A549 (cell line): ENCODE measurements at regions of chr6 and their contacts with region 1.

Region 1: GRCh38 chr6:33744001-33744848 is 2.5 kb downstream of the IP6K3 start:
- DNase-seq: peak; percentile 59 to 69
- ATAC-seq: peak; percentile 70 to 90; a peak in 5 of 6 replicates
- H3K4me3 ChIP-seq: no peak overlapping the region
- H3K27ac ChIP-seq: peak overlapping the region; percentile 68 to 77; a peak in 3 of 6 replicates
- H3K4me1 ChIP-seq: peaks cover 27% of the 10 kb centered on the region
- CTCF ChIP-seq: peak; percentile 79
- EP300 ChIP-seq: no peak
- POLR2A ChIP-seq: no peak
- RAD21 ChIP-seq: peak; percentile 70 to 76

Region 2: GRCh38 chr6:32838114-32838958 is 905.9 kb before region 1 on chr6 and contains the start of gene TAP2:
- CTCF ChIA-PET with region 1: no interaction called
- POLR2A ChIA-PET with region 1: no interaction called
- DNase-seq: peak; percentile 88 to 90
- ATAC-seq: peak; percentile 94 to 98
- H3K4me3 ChIP-seq: peak within 1 kb of the TSS; percentile 74
- H3K27ac ChIP-seq: peak within 1 kb of the TSS; percentile 83 to 90
- H3K4me1 ChIP-seq: peaks cover 8% of the 10 kb centered on the region; the same call in 1 of the 3 replicates
- CTCF ChIP-seq: peak; percentile 81
- EP300 ChIP-seq: no peak
- POLR2A ChIP-seq: peak; percentile 29
- RAD21 ChIP-seq: peak; percentile 90 to 91
- polyA plus RNA-seq, gene TAP2: 11.4 and 12.1 TPM in 2 replicates

Region 3: GRCh38 chr6:33672808-33673207 is 71.4 kb before region 1 on chr6:
- CTCF ChIA-PET with region 1: no interaction called
- POLR2A ChIA-PET with region 1: no interaction called
- DNase-seq: peak; percentile 78 to 85
- ATAC-seq: peak; percentile 85 to 90
- H3K4me3 ChIP-seq: no peak overlapping the region
- H3K27ac ChIP-seq: peak overlapping the region; percentile 73 to 92
- H3K4me1 ChIP-seq: peaks cover 78% of the 10 kb centered on the region
- CTCF ChIP-seq: peak; percentile 38; the same call in 2 of the 3 replicates
- EP300 ChIP-seq: no peak
- POLR2A ChIP-seq: no peak
- RAD21 ChIP-seq: peak; percentile 49 to 60

Region 4: GRCh38 chr6:33711140-33712129 is 32.8 kb before region 1 on chr6 and contains the start of gene UQCC2:
- CTCF ChIA-PET with region 1: interaction called, 23 read pairs
- POLR2A ChIA-PET with region 1: interaction called, 4 read pairs
- DNase-seq: peak; percentile 87 to 95
- ATAC-seq: peak; percentile 88 to 97
- H3K4me3 ChIP-seq: peak within 1 kb of the TSS; percentile 73
- H3K27ac ChIP-seq: peak within 1 kb of the TSS; percentile 98 to 99
- H3K4me1 ChIP-seq: peaks cover 10% of the 10 kb centered on the region; the same call in 2 of the 3 replicates
- CTCF ChIP-seq: peak; percentile 64
- EP300 ChIP-seq: no peak
- POLR2A ChIP-seq: peak; percentile 50
- RAD21 ChIP-seq: peak; percentile 70
- polyA plus RNA-seq, gene UQCC2: 65.5 and 90.8 TPM in 2 replicates

Region 5: DNA sequence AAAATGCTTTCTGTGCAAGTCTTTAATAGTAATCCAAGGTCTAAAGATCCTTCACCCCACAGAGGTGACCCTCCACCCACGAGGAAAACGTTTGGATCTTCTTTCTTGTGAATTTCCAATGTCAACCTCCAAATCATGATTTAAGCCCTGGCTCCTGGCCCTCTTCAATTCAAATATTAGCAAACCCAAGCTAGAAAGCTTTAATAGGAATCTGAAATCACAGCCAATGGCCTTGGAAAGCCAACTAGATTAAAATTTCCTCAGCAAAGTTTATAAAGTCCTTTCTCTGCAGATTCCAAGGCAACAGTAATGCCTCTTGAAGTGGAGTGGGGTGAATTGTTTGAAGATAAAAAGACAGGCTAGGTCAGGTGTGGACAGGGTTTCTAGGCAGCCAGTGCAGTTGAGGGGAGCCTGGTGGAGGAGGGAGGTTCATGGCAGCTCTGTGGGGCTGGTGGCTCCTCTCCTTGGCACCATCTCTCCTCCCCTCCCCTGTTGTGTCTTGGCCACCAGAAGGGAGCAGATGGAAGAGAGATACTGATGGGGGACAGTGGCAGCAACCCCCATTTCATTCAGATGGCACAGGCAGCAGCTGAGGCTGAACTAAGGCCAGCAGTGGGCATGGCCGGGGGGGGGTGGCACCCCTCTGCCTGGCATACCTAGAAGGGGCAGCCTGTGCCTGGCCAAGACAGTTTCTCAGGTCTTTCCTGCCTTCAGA is 20.7 kb before region 1 on chr6:
- CTCF ChIA-PET with region 1: interaction called, 17 read pairs
- POLR2A ChIA-PET with region 1: no interaction called
- DNase-seq: no peak
- ATAC-seq: no peak
- H3K4me3 ChIP-seq: no peak overlapping the region
- H3K27ac ChIP-seq: no peak overlapping the region
- H3K4me1 ChIP-seq: no peaks in the 10 kb centered on the region
- CTCF ChIP-seq: no peak
- EP300 ChIP-seq: no peak
- POLR2A ChIP-seq: no peak
- RAD21 ChIP-seq: no peak

Region 6: DNA sequence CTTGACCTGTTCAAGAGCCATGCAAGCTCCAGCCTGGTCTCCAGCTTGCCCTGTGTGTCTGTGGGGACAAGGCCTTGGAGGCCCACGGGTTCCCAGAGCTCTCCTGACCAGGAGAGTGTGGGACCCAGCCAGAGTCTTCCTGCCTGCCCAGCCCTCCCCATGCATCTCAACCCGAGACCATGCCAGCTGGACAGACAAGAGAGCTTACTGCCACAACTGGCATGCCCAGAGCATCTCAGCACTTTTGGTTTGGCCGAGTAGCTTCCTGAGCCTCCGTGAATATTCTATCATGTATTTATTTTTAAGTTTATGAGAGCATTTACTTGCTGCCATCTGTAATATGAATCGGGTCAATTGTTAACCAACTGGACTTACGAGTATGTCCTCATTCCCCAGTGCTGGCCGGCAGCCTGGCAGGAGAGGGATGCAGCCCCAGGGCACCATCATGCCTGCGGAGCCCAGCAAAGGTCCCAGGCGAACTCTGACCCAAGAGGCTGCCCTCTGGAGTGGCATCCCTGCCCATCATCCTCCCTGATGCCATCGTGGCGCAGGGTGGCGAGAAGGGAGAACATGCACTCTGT is 12.4 kb before region 1 on chr6:
- CTCF ChIA-PET with region 1: interaction called, 16 read pairs
- POLR2A ChIA-PET with region 1: no interaction called
- DNase-seq: no peak
- ATAC-seq: no peak
- H3K4me3 ChIP-seq: no peak overlapping the region
- H3K27ac ChIP-seq: no peak overlapping the region; a peak in 1 of 6 replicates
- H3K4me1 ChIP-seq: no peaks in the 10 kb centered on the region
- CTCF ChIP-seq: no peak
- EP300 ChIP-seq: no peak
- POLR2A ChIP-seq: no peak
- RAD21 ChIP-seq: no peak

Region 7: GRCh38 chr6:33761922-33762629 is 17.9 kb after region 1 on chr6:
- CTCF ChIA-PET with region 1: interaction called, 80 read pairs
- POLR2A ChIA-PET with region 1: no interaction called
- DNase-seq: peak; percentile 40 to 59
- ATAC-seq: peak; percentile 86 to 93
- H3K4me3 ChIP-seq: no peak overlapping the region
- H3K27ac ChIP-seq: peak overlapping the region; percentile 63 to 65; a peak in 4 of 6 replicates
- H3K4me1 ChIP-seq: peaks cover 27% of the 10 kb centered on the region
- CTCF ChIP-seq: peak; percentile 64
- EP300 ChIP-seq: no peak
- POLR2A ChIP-seq: no peak
- RAD21 ChIP-seq: peak; percentile 69 to 77

Region 8: GRCh38 chr6:34027445-34027936 is 283.3 kb after region 1 on chr6:
- CTCF ChIA-PET with region 1: interaction called, 17 read pairs
- POLR2A ChIA-PET with region 1: no interaction called
- DNase-seq: peak; percentile 24 to 68
- ATAC-seq: peak; percentile 84 to 94
- H3K4me3 ChIP-seq: no peak overlapping the region
- H3K27ac ChIP-seq: peak overlapping the region in 1 of 2 experiments; percentile 60; a peak in 2 of 6 replicates
- H3K4me1 ChIP-seq: no peaks in the 10 kb centered on the region
- CTCF ChIP-seq: peak; percentile 63
- EP300 ChIP-seq: no peak
- POLR2A ChIP-seq: no peak
- RAD21 ChIP-seq: peak; percentile 77 to 87

Region 9: DNA sequence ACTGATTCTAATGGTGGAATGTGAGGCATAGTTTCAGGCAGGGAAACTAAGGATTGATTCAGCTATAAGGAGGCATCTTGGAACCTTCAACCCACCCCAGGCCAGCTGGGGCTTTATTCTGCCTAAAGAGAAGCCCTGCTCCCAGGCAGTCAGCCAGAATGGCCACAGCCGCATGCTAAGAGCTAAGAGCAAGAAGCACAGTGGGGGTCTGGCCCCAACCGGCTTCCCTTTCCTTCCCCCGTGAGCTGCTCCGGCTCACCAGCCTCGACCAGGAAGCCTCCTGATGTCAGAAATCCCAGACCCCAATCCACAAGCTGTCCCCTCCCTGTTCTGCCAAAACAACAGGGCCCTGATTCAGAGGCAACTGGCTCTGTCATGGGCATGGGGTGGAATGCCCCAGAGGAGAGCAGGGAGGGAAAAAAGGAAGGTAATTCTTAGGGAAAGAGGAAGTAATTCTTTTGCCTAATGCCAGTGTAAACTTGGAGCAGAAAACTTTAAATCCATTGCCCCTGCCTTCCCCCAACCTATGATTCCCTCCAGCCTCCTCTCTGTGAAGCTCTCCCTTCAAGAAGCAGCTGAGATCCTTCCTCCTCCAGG is 394.8 kb after region 1 on chr6:
- CTCF ChIA-PET with region 1: no interaction called
- POLR2A ChIA-PET with region 1: no interaction called
- DNase-seq: no peak
- ATAC-seq: no peak
- H3K4me3 ChIP-seq: no peak overlapping the region
- H3K27ac ChIP-seq: no peak overlapping the region
- H3K4me1 ChIP-seq: peaks cover 5% of the 10 kb centered on the region; the same call in 1 of the 3 replicates
- CTCF ChIP-seq: no peak
- EP300 ChIP-seq: no peak
- POLR2A ChIP-seq: no peak
- RAD21 ChIP-seq: no peak

Region 10: GRCh38 chr6:34154668-34155447 is 410.6 kb after region 1 on chr6:
- CTCF ChIA-PET with region 1: interaction called, 55 read pairs
- POLR2A ChIA-PET with region 1: no interaction called
- DNase-seq: peak; percentile 22 to 62
- ATAC-seq: peak; percentile 57 to 91
- H3K4me3 ChIP-seq: 0 out of 3 replicates have a peak overlapping the region, but pooled peaks have one; percentile 30
- H3K27ac ChIP-seq: peak overlapping the region; percentile 57 to 76; a peak in 3 of 6 replicates
- H3K4me1 ChIP-seq: no peaks in the 10 kb centered on the region
- CTCF ChIP-seq: peak; percentile 83
- EP300 ChIP-seq: no peak
- POLR2A ChIP-seq: no peak
- RAD21 ChIP-seq: peak; percentile 86 to 95

Region 11: GRCh38 chr6:34757687-34758274 is 1013.6 kb after region 1 on chr6:
- CTCF ChIA-PET with region 1: no interaction called
- POLR2A ChIA-PET with region 1: no interaction called
- DNase-seq: no peak
- ATAC-seq: no peak; a peak in 1 of 6 replicates
- H3K4me3 ChIP-seq: peak overlapping the region; percentile 69
- H3K27ac ChIP-seq: peak overlapping the region; percentile 95 to 98
- H3K4me1 ChIP-seq: 0 out of 3 replicates have a peak, but pooled peaks cover 3% of the 10 kb centered on the region
- CTCF ChIP-seq: no peak
- EP300 ChIP-seq: no peak
- POLR2A ChIP-seq: no peak
- RAD21 ChIP-seq: no peak